Stomach (tissue), 19 donors: ENCODE measurements at regions of chr13 and their contacts with region 1.

Region 1: GRCh38 chr13:78978381-78978998 is 319.5 kb upstream of the OBI1 start:
- DNase-seq: peak; percentile 25 to 80
- H3K4me3 ChIP-seq: no peak overlapping the region
- H3K27ac ChIP-seq: no peak overlapping the region
- H3K4me1 ChIP-seq: no peaks in the 10 kb centered on the region
- H3K27me3 ChIP-seq: peaks cover 0 to 14% (median 0%) of the 10 kb centered on the region in 3 donors
- CTCF ChIP-seq: peak in 5 of 7 experiments; percentile 50 to 79 (median 60)
- EP300 ChIP-seq: no peak
- POLR2A ChIP-seq: no peak

Region 2: GRCh38 chr13:78137404-78138142 is 840.9 kb before region 1 on chr13:
- intact Hi-C with region 1: loop called (anchors 5 kb)
- DNase-seq: peak in 1 of 2 donors; percentile 76
- H3K4me3 ChIP-seq: no peak overlapping the region
- H3K27ac ChIP-seq: no peak overlapping the region
- H3K4me1 ChIP-seq: peaks cover 0 to 6% (median 3%) of the 10 kb centered on the region in 4 donors
- H3K27me3 ChIP-seq: no peaks in the 10 kb centered on the region
- CTCF ChIP-seq: peak in 5 of 7 experiments; percentile 15 to 59 (median 54)
- EP300 ChIP-seq: no peak
- POLR2A ChIP-seq: no peak

Region 3: DNA sequence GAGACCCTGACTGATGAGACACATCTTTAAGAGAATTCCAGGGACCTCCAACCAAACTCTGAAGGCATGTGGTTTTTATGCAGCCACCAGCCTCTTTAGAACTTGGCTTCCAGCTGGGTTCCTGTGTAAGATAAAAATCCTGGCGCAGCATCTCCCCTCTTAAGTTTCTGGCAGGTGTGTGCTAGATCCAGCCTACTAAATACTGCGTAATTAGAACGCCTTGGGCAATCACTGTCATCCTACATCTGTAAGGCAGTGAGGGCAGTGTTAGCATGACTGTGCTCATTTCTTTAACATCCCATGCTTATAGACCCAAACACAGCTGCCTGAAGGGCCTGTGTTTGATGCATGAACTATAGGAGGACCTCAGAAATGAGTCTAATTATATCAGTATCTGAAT is 146.0 kb before region 1 on chr13:
- intact Hi-C with region 1: no loop called
- DNase-seq: no peak
- H3K4me3 ChIP-seq: no peak overlapping the region
- H3K27ac ChIP-seq: no peak overlapping the region
- H3K4me1 ChIP-seq: no peaks in the 10 kb centered on the region
- H3K27me3 ChIP-seq: no peaks in the 10 kb centered on the region
- CTCF ChIP-seq: no peak
- EP300 ChIP-seq: no peak
- POLR2A ChIP-seq: no peak

Region 4: GRCh38 chr13:78852709-78853108 is 125.8 kb before region 1 on chr13:
- intact Hi-C with region 1: no loop called
- DNase-seq: no peak
- H3K4me3 ChIP-seq: no peak overlapping the region
- H3K27ac ChIP-seq: no peak overlapping the region
- H3K4me1 ChIP-seq: no peaks in the 10 kb centered on the region
- H3K27me3 ChIP-seq: no peaks in the 10 kb centered on the region
- CTCF ChIP-seq: no peak
- EP300 ChIP-seq: no peak
- POLR2A ChIP-seq: no peak

Region 5: DNA sequence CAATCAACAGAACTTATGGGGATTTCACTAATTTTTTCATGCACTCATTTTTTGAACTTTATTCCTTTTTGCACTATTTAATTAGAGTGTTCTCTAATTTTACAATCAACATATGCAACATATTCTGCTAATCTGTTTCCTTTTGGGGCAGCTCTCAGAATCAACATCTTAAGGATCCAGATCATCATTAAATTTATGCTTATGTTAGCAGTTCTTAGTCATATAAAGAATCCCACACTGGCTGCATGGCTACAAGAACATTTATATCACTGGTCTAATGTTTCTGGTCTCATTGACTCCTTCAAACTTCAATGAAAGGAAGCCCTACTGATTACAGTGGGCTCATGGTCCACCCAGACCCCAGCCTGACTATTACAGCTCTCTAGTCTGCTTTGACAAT is 182.3 kb after region 1 on chr13:
- intact Hi-C with region 1: no loop called
- DNase-seq: no peak
- H3K4me3 ChIP-seq: no peak overlapping the region
- H3K27ac ChIP-seq: no peak overlapping the region
- H3K4me1 ChIP-seq: no peaks in the 10 kb centered on the region
- H3K27me3 ChIP-seq: no peaks in the 10 kb centered on the region
- CTCF ChIP-seq: no peak
- EP300 ChIP-seq: no peak
- POLR2A ChIP-seq: no peak